Psoas muscle (tissue), 8 donors: ENCODE measurements at regions of chr3 and their contacts with region 1.

Region 1: GRCh38 chr3:98824256-98824655 is 61.1 kb downstream of the ST3GAL6 start:
- DNase-seq: no peak
- ATAC-seq: no peak
- H3K4me3 ChIP-seq: no peak overlapping the region
- H3K27ac ChIP-seq: no peak overlapping the region
- H3K4me1 ChIP-seq: no peaks in the 10 kb centered on the region
- H3K27me3 ChIP-seq: no peaks in the 10 kb centered on the region
- CTCF ChIP-seq: no peak

Region 2: DNA sequence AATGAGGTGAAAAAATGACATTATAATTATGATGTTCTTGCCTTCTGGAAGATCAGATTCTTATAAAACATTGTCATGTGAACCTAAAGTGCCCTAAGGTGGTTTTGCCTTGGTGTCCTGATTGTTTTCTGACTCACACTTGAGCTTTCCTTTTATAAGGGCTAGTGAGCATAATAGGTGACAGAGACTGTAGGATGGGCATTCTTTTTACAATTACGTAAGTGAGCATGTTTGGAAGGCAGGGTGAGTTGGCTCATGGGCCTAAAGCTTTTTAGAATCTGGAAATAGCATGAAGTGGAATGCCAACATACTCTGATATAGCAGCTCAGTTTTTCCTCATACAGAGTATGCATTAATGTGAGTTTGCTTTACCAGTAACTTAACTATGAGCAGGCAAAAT is 961.2 kb before region 1 on chr3:
- intact Hi-C with region 1: no loop called
- DNase-seq: no peak
- ATAC-seq: peak; percentile 53 to 77 (median 71)
- H3K4me3 ChIP-seq: no peak overlapping the region
- H3K27ac ChIP-seq: no peak overlapping the region
- H3K4me1 ChIP-seq: peaks cover 10% of the 10 kb centered on the region
- H3K27me3 ChIP-seq: no peaks in the 10 kb centered on the region
- CTCF ChIP-seq: no peak

Region 3: DNA sequence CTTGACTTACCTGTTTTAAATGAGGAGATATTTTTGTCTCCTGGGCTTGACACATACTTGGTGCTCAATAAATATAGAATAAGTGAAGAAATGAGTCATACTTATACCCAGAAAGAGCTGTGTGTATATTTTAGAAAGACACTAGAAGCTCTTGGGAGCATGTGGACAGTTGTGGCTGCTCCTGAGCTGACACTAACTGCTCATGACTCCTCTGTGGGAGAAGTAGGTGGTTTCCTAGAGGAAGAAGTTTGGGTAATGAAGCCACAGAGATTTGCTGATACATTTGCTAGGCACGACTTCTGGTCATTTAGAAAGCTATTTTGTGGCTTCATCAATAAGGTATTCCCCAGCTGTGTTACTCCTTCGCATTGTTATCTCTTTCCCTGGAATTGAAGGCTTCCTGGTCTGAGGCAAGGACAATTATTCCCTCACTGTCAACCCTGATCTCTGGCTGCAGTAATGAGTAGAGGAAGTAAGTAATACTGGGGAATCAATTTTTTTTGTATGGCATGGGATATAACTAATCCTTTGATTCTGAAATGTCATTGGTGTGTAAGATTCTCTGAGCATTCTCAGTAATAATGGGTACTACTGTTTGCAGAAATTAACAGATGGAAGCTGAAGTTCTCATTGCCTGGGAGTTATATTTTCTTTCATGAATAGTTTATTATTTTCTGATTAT is 156.8 kb after region 1 on chr3:
- intact Hi-C with region 1: loop called in 1 of 2 experiments (anchors 5 kb)
- DNase-seq: no peak
- ATAC-seq: no peak
- H3K4me3 ChIP-seq: no peak overlapping the region
- H3K27ac ChIP-seq: no peak overlapping the region
- H3K4me1 ChIP-seq: no peaks in the 10 kb centered on the region
- H3K27me3 ChIP-seq: no peaks in the 10 kb centered on the region
- CTCF ChIP-seq: no peak